ENCODE measurements at regions of chr5 and their contacts with region 1.

Region 1: DNA sequence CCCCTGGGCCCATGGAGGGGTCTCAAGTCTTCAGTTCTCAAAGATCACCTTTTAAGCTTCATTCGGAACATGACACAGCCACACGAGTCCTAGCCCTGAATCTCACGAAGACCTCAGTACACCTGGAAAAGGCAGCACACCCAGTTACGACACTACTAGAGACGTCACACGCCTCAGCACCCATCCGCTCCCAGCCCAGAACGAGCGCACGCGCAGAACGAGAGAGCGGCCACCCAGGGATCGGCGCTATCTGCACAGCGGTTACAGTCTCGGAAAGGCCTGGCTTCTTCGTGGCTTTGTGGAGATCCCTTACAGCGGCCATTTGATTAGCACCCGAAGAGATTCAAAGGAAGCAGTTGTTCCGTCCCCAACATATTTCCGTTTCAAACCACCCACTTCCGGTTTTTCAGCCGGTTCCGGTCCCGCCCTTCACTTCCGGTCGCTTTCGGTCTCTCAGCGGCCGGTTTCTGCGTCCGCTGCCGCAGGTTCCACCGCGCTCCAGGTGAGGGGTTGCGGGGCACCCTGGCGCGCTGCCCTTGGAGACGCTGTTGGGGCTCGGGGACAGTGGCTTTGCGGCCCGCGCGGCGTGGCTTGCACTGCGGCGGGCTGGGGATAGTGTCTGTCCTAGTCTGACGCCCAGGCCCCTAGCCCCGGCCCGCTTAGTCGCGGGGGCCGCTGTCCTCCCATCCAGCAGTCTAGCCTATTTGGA is at the start of gene UBLCP1:
- DNase-seq: peak; percentile 71
- H3K4me3 Mint-ChIP-seq: peak within 1 kb of the TSS; percentile 96
- H3K27ac Mint-ChIP-seq: peak within 1 kb of the TSS; percentile 98
- H3K4me1 Mint-ChIP-seq: peaks cover 21% of the 10 kb centered on the region
- H3K27me3 Mint-ChIP-seq: peaks cover 2% of the 10 kb centered on the region
- total RNA-seq, gene UBLCP1: 30.8 and 32.3 TPM in 2 replicates

Region 2: DNA sequence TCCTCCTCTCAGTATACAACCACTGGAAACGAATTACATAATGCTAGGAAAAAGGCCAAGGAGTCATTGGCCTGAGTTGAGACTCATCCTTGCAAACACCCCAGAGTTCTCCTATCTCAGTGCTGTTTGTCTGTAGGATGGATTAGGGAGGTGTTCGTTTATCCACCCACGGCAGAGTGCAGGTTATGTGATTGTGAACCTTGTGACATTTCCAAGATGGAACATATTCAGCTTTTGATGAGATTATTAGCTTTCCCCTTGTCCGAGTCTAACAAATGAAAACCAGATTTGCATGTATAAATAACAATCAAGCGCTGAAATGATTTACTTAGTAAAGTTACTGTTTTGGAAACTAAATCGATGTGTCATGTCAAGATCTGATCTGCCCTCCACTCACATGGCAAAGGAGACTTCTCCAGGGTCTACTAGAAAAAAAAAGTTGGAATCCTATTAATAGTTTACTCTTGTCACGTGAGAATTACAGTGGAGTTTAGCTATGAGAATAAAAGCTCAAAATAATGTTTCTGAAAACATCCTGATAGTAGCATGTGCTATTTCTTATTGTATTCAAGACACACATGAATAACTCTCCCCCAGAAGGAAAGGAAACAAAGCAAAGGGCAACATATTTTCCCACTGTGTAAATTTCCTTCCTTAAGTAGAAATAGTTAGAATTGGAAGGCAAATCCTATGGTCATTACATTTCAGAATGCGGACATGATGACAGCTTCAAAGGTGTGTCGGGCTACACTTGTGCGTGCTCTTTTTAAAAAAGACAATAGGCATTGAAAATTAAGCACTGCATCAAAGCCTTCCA is 763.7 kb before region 1 on chr5:
- intact Hi-C with region 1: no loop called
- DNase-seq: no peak
- H3K4me3 Mint-ChIP-seq: no peak overlapping the region
- H3K27ac Mint-ChIP-seq: no peak overlapping the region
- H3K4me1 Mint-ChIP-seq: no peaks in the 10 kb centered on the region
- H3K27me3 Mint-ChIP-seq: no peaks in the 10 kb centered on the region

Region 3: DNA sequence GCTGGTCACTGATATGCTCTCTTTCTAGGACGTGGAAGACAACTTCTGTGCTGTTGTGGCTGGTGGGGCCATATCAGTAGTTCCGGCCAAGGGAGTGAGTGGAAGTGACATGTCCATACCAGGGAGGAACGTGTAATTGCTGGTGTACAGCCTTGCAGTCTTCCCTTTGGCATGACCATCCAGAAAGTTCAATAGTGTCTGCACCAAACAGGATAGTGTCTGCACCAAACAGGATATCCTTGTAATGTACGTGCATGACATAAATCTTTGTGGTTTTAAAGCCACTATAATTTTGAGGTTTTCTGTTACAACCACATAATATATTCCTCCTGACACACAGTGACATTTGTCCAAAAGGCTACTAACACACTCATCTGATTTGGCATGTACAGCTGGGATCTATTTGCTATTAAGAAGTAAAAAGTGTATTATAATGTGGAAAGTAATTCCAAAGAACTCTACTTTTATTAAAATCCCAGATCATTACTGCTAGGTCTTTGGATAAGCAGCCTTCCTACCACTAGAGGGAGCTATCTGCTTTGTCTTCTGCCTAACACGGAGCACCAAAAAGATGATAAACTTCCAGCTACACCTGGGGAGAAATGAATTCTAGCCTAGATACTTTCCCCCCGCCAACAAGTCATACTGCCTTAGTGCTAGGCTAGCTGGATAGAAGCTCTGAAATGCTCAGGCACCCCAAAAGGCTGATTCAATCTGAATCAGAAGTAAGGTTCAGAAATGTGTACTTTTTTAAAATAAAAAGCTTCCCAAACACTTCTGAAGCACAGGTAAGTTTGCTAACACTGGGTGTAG is 106.4 kb before region 1 on chr5:
- intact Hi-C with region 1: loop called (anchors 1 kb)
- DNase-seq: peak; percentile 25
- H3K4me3 Mint-ChIP-seq: no peak overlapping the region
- H3K27ac Mint-ChIP-seq: no peak overlapping the region
- H3K4me1 Mint-ChIP-seq: peaks cover 42% of the 10 kb centered on the region
- H3K27me3 Mint-ChIP-seq: no peaks in the 10 kb centered on the region

Region 4: DNA sequence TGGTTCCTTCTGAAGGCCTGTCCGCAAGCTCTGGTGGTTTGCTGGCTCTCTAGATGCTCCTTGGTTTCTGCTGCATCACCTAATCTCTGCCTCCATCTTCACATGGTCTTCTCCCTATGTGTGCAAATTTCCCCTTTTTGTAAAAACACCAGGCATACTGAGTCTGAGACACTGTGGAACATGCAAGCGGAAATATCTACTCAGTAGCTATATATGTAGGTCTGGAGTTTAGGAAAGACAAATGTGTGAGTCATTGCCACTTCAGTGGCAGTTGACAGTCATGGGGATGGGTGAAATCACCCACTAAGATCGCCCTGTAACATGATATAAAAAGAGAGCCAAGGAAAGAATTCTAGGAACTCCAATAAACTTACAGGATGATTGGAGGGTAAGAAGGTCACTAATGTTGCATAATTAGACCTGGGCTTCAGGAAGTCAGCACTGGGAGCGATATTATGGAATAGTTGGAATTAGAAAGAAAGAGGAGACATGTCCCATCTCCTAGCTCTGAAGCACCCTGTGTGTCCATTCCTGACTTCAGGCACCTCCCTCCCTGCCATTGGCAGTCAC is 22.6 kb before region 1 on chr5:
- intact Hi-C with region 1: loop called (anchors 1 kb)
- DNase-seq: no peak
- H3K4me3 Mint-ChIP-seq: peak overlapping the region; percentile 11
- H3K27ac Mint-ChIP-seq: peak overlapping the region; percentile 61
- H3K4me1 Mint-ChIP-seq: peaks cover 41% of the 10 kb centered on the region
- H3K27me3 Mint-ChIP-seq: peaks cover 5% of the 10 kb centered on the region

Region 5: GRCh38 chr5:159336991-159337955 is 74.3 kb after region 1 on chr5:
- intact Hi-C with region 1: loop called (anchors 2 kb)
- DNase-seq: peak; percentile 66
- H3K4me3 Mint-ChIP-seq: peak overlapping the region; percentile 43
- H3K27ac Mint-ChIP-seq: peak overlapping the region; percentile 50
- H3K4me1 Mint-ChIP-seq: peaks cover 87% of the 10 kb centered on the region
- H3K27me3 Mint-ChIP-seq: no peaks in the 10 kb centered on the region

Measured in activated T-helper 1 cell treated with anti-CD3 and anti-CD28 coated beads, Interleukin-12 subunit alpha, Interleukin-12 subunit beta, Interleukin-2, Interleukin-4 antibody, amounts not matched to agents 30 ng/mL and 10 ng/mL and 1 ng/mL, durations not matched to agents 14 hours and 24 hours and 36 hours (primary cell).